ENCODE measurements at regions of chr22 and their contacts with region 1.

Region 1: DNA sequence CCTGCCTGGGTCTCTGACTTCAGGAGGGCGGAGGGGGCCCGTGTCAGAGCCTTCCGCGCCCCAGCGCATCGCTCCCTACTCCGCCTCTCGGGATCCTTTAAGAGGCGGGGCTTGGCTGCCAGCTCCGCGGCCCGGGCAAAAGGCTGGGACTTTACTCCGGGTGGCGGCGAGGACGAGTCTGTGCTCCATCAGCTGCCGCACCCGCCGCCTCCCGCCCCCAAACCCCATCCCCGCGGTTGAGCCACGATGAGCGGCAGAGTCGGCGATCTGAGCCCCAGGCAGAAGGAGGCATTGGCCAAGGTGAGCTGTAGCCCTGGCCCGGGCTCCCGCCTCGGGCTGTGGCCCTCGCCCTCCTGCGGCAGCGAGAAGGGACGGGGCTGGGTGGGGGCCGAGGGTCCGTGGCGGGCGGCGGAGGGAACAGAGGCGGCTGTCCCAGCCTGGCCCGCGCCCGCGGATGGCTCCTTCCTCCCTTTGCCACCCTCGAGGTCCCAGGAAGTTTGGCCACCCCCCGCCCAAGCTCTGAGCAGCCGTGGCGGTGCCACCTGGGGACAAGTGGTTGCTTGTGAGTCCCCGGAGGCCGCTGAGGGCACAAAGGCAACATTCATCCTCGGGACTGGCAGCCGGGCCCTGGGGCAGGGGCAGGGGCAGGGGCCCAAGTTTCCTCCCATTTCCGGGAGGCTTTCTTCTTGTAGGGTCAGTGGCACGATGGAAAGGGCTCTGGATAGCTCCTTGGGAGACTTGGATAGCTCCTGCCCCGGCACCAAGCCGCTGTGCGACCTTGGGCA is at the start of gene SEC14L2:
- DNase-seq: peak; percentile 79
- H3K4me3 ChIP-seq: peak within 1 kb of the TSS; percentile 77 to 87
- H3K27ac ChIP-seq: peak within 1 kb of the TSS; percentile 91 to 95
- H3K4me1 ChIP-seq: peaks cover 16% of the 10 kb centered on the region
- H3K27me3 ChIP-seq: no peaks in the 10 kb centered on the region
- CTCF ChIP-seq: no peak
- POLR2A ChIP-seq: peak; percentile 88
- total RNA-seq, gene SEC14L2: 16.8 to 31.1 TPM

Region 2: GRCh38 chr22:30423982-30424963 is 27.2 kb after region 1 on chr22:
- intact Hi-C with region 1: loop called (anchors 2 kb)
- DNase-seq: peak; percentile 99
- H3K4me3 ChIP-seq: peak overlapping the region; percentile 33 to 48
- H3K27ac ChIP-seq: peak overlapping the region; percentile 95 to 96
- H3K4me1 ChIP-seq: peaks cover 28% of the 10 kb centered on the region
- H3K27me3 ChIP-seq: no peaks in the 10 kb centered on the region
- CTCF ChIP-seq: no peak
- POLR2A ChIP-seq: peak; percentile 68

Measured in prostate gland (tissue), 2 donors.